K562 (cell line): ENCODE measurements at regions of chr21 and their contacts with region 1.

Region 1: GRCh38 chr21:23890652-23891051 is 1716.6 kb downstream of the MRPL39 start:
- DNase-seq: peak in 2 of 4 experiments; percentile 12 to 85
- ATAC-seq: peak; percentile 32
- H3K4me3 ChIP-seq: no peak overlapping the region; the same call in 1 of the 2 replicates
- H3K27ac ChIP-seq: peak overlapping the region; percentile 56
- H3K4me1 ChIP-seq: peaks cover 3 to 4% of the 10 kb centered on the region in 2 experiments; a peak in 2 of 5 replicates
- H3K27me3 ChIP-seq: no peaks in the 10 kb centered on the region
- CTCF ChIP-seq: no peak
- EP300 ChIP-seq: peak; percentile 82
- POLR2A ChIP-seq: no peak
- RAD21 ChIP-seq: no peak

Region 2: GRCh38 chr21:23921670-23922418 is 31.2 kb after region 1 on chr21:
- CTCF ChIA-PET with region 1: no interaction called
- POLR2A ChIA-PET with region 1: no interaction called
- in situ Hi-C with region 1: no loop called
- intact Hi-C with region 1: loop called (anchors 2 kb)
- DNase-seq: peak; percentile 42 to 88 (median 72)
- ATAC-seq: peak; percentile 92
- H3K4me3 ChIP-seq: no peak overlapping the region
- H3K27ac ChIP-seq: peak overlapping the region; percentile 66
- H3K4me1 ChIP-seq: no peaks in the 10 kb centered on the region; a peak in 1 of 5 replicates
- H3K27me3 ChIP-seq: no peaks in the 10 kb centered on the region
- CTCF ChIP-seq: no peak
- EP300 ChIP-seq: peak; percentile 55
- POLR2A ChIP-seq: no peak
- RAD21 ChIP-seq: peak in 1 of 2 experiments; percentile 6; a peak in 1 of 4 replicates